Calu3 (cell line): ENCODE measurements at regions of chr6 and their contacts with region 1.

Region 1: DNA sequence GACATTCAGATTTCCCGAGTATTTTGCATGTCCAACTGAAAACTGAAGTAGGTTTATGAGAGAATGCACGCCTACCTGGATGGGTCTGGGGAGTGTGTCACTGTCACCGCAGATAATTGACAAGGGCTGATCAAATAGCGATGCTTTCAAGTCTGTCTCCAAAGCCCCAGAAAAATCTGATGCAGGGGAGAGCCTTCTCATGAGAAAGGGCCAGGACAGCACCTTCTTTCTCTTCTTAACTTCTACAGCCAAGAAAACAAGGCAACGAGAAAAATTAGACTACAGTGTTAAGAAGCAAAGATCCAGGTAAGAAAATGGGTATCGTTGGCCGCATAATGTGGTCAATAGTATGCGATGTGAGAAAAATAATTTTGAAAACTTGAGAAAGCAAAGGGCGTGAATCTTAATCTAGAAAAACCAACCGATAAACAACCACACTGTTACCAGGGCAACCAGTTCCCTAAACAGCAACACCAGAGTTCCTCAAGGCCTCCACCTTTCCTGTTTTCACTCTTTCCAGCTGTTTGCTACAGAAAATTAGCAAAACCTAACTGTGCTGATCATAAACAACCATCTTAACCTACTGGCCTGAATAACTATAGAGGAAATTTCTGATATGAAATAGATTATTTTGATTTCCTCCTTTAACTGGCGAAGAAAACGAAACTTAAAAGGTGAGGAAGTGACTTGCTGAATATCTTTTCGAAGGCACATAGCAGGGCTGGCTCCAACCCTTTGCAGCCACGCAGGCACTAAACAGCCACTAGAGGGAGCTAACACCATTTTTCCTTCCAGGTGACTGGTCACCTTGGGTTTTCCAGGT is 2.6 kb downstream of the TAGAP start:
- DNase-seq: peak; percentile 80
- H3K4me3 Mint-ChIP-seq: no peak overlapping the region
- H3K27ac Mint-ChIP-seq: no peak overlapping the region
- H3K4me1 Mint-ChIP-seq: peaks cover 30% of the 10 kb centered on the region
- H3K27me3 Mint-ChIP-seq: peaks cover 4% of the 10 kb centered on the region
- CTCF ChIP-seq: peak; percentile 87

Region 2: DNA sequence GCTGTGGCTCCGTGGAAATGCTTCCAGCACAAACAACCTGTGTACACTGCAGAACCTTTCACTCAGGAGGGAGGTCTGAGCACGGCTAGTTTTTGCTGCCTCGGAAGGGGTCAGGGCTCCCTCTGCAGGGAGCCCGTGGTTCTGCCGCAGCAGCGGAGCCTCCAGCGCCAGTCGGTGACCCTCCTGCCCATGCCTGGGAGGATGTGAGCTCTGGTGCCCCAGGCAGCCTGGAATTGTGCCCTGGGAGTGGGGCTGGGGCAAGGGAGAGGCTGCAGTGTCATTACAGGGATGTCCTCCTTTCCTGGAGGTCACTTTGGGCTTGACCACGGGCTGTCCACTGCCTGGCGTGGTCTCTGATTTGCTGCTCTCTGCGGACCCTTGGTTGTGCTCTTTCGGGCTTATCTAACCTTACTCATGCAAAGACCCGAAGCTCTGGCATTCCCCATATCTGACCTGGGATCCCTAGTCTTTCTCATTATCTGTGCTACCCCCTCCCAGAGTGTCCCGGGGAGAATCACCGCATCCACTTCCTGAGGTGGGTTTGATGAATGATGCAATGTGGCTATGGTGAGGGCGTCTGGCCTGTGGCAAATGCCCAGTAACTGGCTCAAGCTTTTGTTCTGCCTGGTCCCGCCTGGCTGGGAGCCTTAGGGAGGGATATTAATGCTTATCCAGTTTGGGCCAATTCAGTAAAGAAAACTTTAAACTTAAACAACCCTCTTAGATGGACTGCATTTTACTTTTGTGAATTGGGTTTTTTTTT is 62.1 kb after region 1 on chr6:
- CTCF ChIA-PET with region 1: interaction called, 6 read pairs
- intact Hi-C with region 1: loop called (anchors 1 kb)
- DNase-seq: peak; percentile 75
- H3K4me3 Mint-ChIP-seq: no peak overlapping the region
- H3K27ac Mint-ChIP-seq: no peak overlapping the region
- H3K4me1 Mint-ChIP-seq: peaks cover 36% of the 10 kb centered on the region
- H3K27me3 Mint-ChIP-seq: peaks cover 34% of the 10 kb centered on the region
- CTCF ChIP-seq: peak; percentile 77

Region 3: DNA sequence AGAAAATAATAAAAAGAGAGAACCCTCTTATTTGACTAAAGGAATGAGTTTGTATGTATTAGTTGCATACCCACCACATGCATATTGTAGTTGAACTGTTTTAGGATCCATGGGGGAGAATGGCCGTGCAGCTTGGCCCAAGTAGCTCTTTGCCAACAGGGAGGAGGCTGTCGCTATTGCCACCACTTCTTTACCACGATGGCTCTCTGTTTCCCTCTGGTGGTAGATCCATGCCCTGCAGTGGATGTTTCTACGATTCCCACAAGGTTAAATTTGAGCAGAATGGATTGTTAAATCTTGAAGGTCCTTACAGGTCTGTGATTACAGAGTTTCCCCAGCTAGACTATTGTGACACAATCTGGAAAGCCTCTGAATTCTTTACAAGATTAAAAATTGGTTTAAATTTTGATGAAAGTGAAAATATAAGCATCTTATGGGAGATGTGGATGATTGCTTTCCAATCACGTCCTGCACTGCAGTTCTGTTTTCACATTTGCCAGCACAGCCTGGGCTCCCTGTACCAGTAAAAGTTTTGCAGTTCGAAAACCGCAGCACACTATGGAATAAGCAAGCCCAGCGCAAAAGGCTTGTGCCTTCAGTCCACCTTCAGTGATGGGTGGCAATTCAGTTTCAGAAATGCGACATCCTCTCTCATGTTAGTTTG is 92.6 kb after region 1 on chr6:
- CTCF ChIA-PET with region 1: interaction called, 15 read pairs
- intact Hi-C with region 1: loop called (anchors 1 kb)
- DNase-seq: peak; percentile 80
- H3K4me3 Mint-ChIP-seq: no peak overlapping the region
- H3K27ac Mint-ChIP-seq: no peak overlapping the region
- H3K4me1 Mint-ChIP-seq: peaks cover 12% of the 10 kb centered on the region
- H3K27me3 Mint-ChIP-seq: peaks cover 85% of the 10 kb centered on the region
- CTCF ChIP-seq: peak; percentile 69